Motor neuron (in vitro differentiated cells): ENCODE measurements at regions of chr5 and their contacts with region 1.

Region 1: DNA sequence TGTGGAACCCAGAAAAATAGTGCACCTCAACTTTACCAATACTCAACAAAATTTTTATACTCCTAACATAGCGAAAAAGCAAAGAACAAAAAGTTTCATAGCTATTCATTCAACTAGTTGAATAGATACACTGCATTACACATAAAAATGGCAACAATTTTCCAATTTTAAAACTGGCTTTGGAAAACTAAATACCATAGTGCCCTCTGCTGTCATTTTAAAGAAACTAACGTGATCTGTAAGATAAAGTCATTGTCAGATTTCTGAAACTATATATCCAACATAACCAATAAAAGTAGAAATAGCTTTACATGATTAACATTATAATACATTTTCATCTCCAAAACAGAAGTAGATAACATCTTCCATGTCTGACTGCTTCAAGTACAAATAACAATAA is 31.6 kb downstream of the DTWD2 start:
- ATAC-seq: no peak
- H3K4me3 ChIP-seq: no peak overlapping the region
- H3K27ac ChIP-seq: no peak overlapping the region
- H3K4me1 ChIP-seq: no peaks in the 10 kb centered on the region

Region 2: DNA sequence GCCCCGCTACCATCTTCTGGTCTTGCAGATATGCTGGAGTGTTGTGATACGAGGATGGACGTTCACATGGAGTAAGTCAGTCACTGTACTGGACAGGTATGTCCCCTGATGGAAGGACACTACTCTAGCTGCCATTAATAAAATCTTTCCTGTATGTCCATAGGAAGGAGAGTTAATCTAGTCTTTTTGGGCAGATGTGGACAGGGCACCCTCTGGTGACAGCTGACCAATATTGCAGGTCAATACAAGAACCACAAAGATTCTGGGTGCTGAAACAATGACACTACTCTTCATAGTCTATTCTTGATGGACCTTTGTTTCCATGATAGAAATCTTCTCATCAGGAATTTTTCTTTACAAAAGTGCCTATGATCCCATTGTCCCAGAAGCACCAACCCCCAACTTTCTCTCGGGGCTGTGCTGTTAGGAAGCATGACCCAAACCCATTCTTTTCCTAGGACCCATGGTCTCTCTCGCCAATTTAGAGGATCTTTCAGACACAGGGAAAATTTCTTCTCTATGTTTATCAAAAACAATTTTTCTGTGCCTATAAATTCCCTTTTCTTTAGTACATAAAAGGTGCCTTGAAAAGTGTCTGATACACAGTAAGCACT is 345.3 kb before region 1 on chr5:
- in situ Hi-C with region 1: no loop called
- ATAC-seq: peak in 2 of 8 experiments; percentile 31 to 61
- H3K4me3 ChIP-seq: no peak overlapping the region
- H3K27ac ChIP-seq: no peak overlapping the region
- H3K4me1 ChIP-seq: peaks cover 2 to 10% of the 10 kb centered on the region in 2 donors

Region 3: GRCh38 chr5:118791926-118792734 is 164.6 kb before region 1 on chr5:
- in situ Hi-C with region 1: loop called in 1 of 9 experiments (anchors 25 kb)
- ATAC-seq: peak; percentile 67 to 95 (median 78)
- H3K4me3 ChIP-seq: no peak overlapping the region
- H3K27ac ChIP-seq: no peak overlapping the region
- H3K4me1 ChIP-seq: peaks cover 8 to 11% of the 10 kb centered on the region in 2 donors

Region 4: GRCh38 chr5:119386596-119387344 is 430.0 kb after region 1 on chr5:
- in situ Hi-C with region 1: no loop called
- ATAC-seq: no peak
- H3K4me3 ChIP-seq: no peak overlapping the region
- H3K27ac ChIP-seq: no peak overlapping the region
- H3K4me1 ChIP-seq: no peaks in the 10 kb centered on the region